B cell (primary cell): ENCODE measurements at regions of chr2 and their contacts with region 1.

Region 1: GRCh38 chr2:241041589-241042158 is 43.3 kb downstream of the SNED1 start:
- DNase-seq: peak; percentile 92
- ATAC-seq: peak; percentile 67
- H3K4me3 ChIP-seq: peak overlapping the region in 1 of 5 experiments; percentile 15
- H3K4me3 Mint-ChIP-seq: peak overlapping the region; percentile 92
- H3K27ac ChIP-seq: peak overlapping the region; percentile 90 to 96
- H3K27ac Mint-ChIP-seq: peak overlapping the region; percentile 91
- H3K4me1 ChIP-seq: peaks cover 58 to 62% of the 10 kb centered on the region in 2 donors
- H3K4me1 Mint-ChIP-seq: peaks cover 66% of the 10 kb centered on the region
- H3K27me3 ChIP-seq: no peaks in the 10 kb centered on the region
- H3K27me3 Mint-ChIP-seq: no peaks in the 10 kb centered on the region
- CTCF ChIP-seq: no peak

Region 2: GRCh38 chr2:240972636-240973521 is 68.8 kb before region 1 on chr2:
- CTCF ChIA-PET with region 1: no interaction called
- POLR2A ChIA-PET with region 1: no interaction called
- intact Hi-C with region 1: no loop called
- DNase-seq: no peak
- ATAC-seq: no peak
- H3K4me3 ChIP-seq: no peak overlapping the region
- H3K4me3 Mint-ChIP-seq: no peak overlapping the region
- H3K27ac ChIP-seq: no peak overlapping the region
- H3K27ac Mint-ChIP-seq: no peak overlapping the region
- H3K4me1 ChIP-seq: no peaks in the 10 kb centered on the region
- H3K4me1 Mint-ChIP-seq: no peaks in the 10 kb centered on the region
- H3K27me3 ChIP-seq: peaks cover 0 to 4% (median 0%) of the 10 kb centered on the region in 4 experiments
- H3K27me3 Mint-ChIP-seq: peaks cover 24% of the 10 kb centered on the region
- CTCF ChIP-seq: no peak

Region 3: DNA sequence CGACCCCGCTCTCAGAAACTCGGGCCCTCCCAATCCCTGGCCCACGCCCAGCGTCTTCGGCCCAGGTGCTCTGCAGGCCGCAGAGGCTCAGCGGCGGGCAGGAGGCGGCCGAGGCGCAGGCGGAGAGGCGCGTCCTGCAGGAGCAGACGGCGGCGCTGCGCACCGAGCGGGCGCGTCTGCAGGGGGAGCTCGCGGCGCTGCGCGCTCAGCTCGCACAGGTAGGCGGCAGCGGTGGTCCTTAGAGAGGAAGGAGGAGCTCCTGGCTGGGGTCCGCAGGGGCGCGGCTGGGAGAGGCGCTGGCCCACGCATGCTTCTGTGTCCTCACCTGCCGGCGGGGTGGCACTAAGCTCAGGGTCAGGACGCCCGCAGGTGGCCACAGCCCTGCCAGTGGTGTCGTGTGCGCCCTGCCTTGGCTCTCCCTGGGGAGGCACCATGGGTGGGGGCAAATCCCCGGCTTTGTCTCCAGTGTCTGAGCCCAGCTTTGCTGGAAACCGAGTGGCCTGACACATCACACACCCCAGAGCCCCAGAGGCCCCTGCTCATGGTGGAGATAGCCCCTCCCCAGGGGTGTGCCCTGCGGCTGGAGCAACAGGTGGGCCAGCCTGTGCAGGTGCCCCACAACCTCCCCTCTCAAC is 58.2 kb before region 1 on chr2:
- CTCF ChIA-PET with region 1: no interaction called
- POLR2A ChIA-PET with region 1: no interaction called
- intact Hi-C with region 1: loop called (anchors 5 kb)
- DNase-seq: peak; percentile 70
- ATAC-seq: peak; percentile 83
- H3K4me3 ChIP-seq: no peak overlapping the region
- H3K4me3 Mint-ChIP-seq: no peak overlapping the region
- H3K27ac ChIP-seq: no peak overlapping the region
- H3K27ac Mint-ChIP-seq: no peak overlapping the region
- H3K4me1 ChIP-seq: peaks cover 0 to 4% of the 10 kb centered on the region in 2 donors
- H3K4me1 Mint-ChIP-seq: peaks cover 3% of the 10 kb centered on the region
- H3K27me3 ChIP-seq: peaks cover 0 to 10% (median 0%) of the 10 kb centered on the region in 4 experiments
- H3K27me3 Mint-ChIP-seq: peaks cover 3% of the 10 kb centered on the region
- CTCF ChIP-seq: peak; percentile 67

Region 4: DNA sequence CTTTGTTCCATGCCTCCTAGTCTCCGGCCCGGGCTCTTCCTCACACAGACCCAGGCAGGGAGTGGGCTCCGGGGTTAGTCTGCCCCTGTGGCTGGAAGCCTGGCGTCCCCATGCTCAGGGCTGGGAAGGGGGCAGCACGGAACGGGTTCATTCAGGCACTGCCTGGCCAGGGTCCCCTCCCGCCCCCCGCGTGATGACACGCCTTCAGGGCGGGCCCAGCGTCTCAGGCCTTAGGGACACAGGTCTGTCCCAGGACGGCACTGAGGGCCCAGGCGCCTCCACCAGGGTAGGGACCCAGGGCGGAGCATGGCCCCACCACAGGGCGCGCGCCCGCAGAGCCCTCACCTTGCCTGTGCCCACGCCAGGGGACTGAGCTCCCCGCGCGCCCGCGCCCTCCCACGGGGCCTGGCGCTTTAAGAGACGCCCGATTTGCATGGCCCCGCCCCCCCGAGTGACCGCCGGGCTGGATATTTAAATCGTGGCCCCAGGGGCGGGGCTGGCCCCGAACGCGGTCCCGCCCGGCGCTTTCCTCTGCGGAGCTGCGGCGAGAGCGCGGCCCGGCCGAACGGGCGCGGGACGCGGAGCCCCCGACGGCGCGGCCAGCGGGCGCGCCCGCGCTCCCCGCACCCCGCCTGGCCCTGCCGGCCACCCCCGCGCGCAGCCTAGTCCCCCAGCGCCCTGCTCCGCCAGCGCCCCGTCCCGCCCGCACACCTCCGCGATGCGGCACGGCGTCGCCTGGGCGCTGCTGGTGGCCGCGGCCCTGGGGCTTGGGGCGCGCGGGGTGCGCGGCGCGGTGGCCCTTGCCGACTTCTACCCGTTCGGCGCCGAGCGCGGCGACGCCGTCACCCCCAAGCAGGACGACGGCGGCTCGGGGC is 43.3 kb before region 1 on chr2 and contains the start of gene SNED1:
- CTCF ChIA-PET with region 1: no interaction called
- POLR2A ChIA-PET with region 1: no interaction called
- intact Hi-C with region 1: loop called (anchors 1 kb)
- DNase-seq: peak; percentile 76
- ATAC-seq: peak; percentile 88
- H3K4me3 ChIP-seq: peak within 1 kb of the TSS in 4 of 5 experiments; percentile 17 to 46 (median 36)
- H3K4me3 Mint-ChIP-seq: peak within 1 kb of the TSS; percentile 74
- H3K27ac ChIP-seq: no peak within 1 kb of the TSS
- H3K27ac Mint-ChIP-seq: no peak within 1 kb of the TSS
- H3K4me1 ChIP-seq: peaks cover 7 to 8% of the 10 kb centered on the region in 2 donors
- H3K4me1 Mint-ChIP-seq: peaks cover 11% of the 10 kb centered on the region
- H3K27me3 ChIP-seq: peaks cover 0 to 37% (median 8%) of the 10 kb centered on the region in 4 experiments
- H3K27me3 Mint-ChIP-seq: peaks cover 33% of the 10 kb centered on the region
- CTCF ChIP-seq: no peak
- total RNA-seq, gene SNED1: 336 and 346 TPM in 2 replicates

Region 5: GRCh38 chr2:241064008-241064801 is 22.5 kb after region 1 on chr2:
- CTCF ChIA-PET with region 1: interaction called, 5 read pairs
- POLR2A ChIA-PET with region 1: no interaction called
- intact Hi-C with region 1: loop called (anchors 1 kb)
- DNase-seq: peak; percentile 58
- ATAC-seq: peak; percentile 65
- H3K4me3 ChIP-seq: peak overlapping the region in 2 of 5 experiments; percentile 36 to 38
- H3K4me3 Mint-ChIP-seq: peak overlapping the region; percentile 63
- H3K27ac ChIP-seq: no peak overlapping the region
- H3K27ac Mint-ChIP-seq: no peak overlapping the region
- H3K4me1 ChIP-seq: peaks cover 3 to 9% of the 10 kb centered on the region in 2 donors
- H3K4me1 Mint-ChIP-seq: peaks cover 4% of the 10 kb centered on the region
- H3K27me3 ChIP-seq: peaks cover 0 to 6% (median 0%) of the 10 kb centered on the region in 4 experiments
- H3K27me3 Mint-ChIP-seq: no peaks in the 10 kb centered on the region
- CTCF ChIP-seq: no peak

Region 6: GRCh38 chr2:241074901-241075540 is 33.3 kb after region 1 on chr2:
- CTCF ChIA-PET with region 1: interaction called, 7 read pairs
- POLR2A ChIA-PET with region 1: interaction called, 3 read pairs
- intact Hi-C with region 1: loop called (anchors 5 kb)
- DNase-seq: no peak
- ATAC-seq: no peak
- H3K4me3 ChIP-seq: no peak overlapping the region
- H3K4me3 Mint-ChIP-seq: no peak overlapping the region
- H3K27ac ChIP-seq: no peak overlapping the region
- H3K27ac Mint-ChIP-seq: no peak overlapping the region
- H3K4me1 ChIP-seq: no peaks in the 10 kb centered on the region
- H3K4me1 Mint-ChIP-seq: peaks cover 5% of the 10 kb centered on the region
- H3K27me3 ChIP-seq: no peaks in the 10 kb centered on the region
- H3K27me3 Mint-ChIP-seq: no peaks in the 10 kb centered on the region
- CTCF ChIP-seq: no peak

Region 7: DNA sequence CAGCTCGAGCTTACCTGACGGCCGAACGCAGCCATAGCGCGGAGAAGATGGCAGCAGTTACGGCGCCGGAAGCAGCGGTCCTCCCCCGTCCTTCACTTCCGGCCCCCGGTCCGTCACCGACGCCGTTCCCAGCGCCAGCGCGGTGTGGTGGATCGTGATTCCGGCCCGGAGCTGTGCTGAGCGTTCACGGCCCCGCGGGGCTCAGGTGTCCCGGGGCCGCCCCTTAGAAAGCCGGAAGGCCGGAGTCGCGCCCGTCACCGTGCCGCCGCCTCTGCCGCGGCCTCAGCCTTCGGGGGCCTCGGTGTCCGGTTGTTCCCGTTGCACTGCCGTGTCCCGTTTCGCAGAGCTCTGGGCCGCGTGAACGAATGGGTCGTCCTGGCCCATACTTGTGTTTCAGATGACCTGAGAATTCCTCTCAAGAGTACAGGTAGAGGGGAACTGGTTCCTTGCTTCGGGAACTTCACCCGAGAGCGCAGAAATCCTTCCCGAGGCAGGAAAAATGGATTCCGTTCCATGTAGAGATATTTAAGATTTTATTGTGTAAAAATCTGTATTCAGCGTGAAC is 60.6 kb after region 1 on chr2 and contains the start of gene MTERF4:
- CTCF ChIA-PET with region 1: interaction called, 3 read pairs
- POLR2A ChIA-PET with region 1: interaction called, 4 read pairs
- intact Hi-C with region 1: loop called (anchors 5 kb)
- DNase-seq: peak; percentile 93
- ATAC-seq: peak; percentile 91
- H3K4me3 ChIP-seq: peak within 1 kb of the TSS; percentile 73 to 95 (median 93)
- H3K4me3 Mint-ChIP-seq: peak within 1 kb of the TSS; percentile 98
- H3K27ac ChIP-seq: peak within 1 kb of the TSS; percentile 88 to 89
- H3K27ac Mint-ChIP-seq: peak within 1 kb of the TSS; percentile 97
- H3K4me1 ChIP-seq: peaks cover 43 to 56% of the 10 kb centered on the region in 2 donors
- H3K4me1 Mint-ChIP-seq: peaks cover 49% of the 10 kb centered on the region
- H3K27me3 ChIP-seq: no peaks in the 10 kb centered on the region
- H3K27me3 Mint-ChIP-seq: no peaks in the 10 kb centered on the region
- CTCF ChIP-seq: no peak
- total RNA-seq, gene MTERF4: 153 and 159 TPM in 2 replicates